Mammary epithelial cell (primary cell): ENCODE measurements at regions of chr4 and their contacts with region 1.

Region 1: GRCh38 chr4:174318829-174319764 is 35.4 kb downstream of the CEP44 start:
- DNase-seq: peak; percentile 27
- H3K4me3 ChIP-seq: no peak overlapping the region
- H3K27ac ChIP-seq: no peak overlapping the region
- H3K4me1 ChIP-seq: peaks cover 10% of the 10 kb centered on the region
- H3K27me3 ChIP-seq: no peaks in the 10 kb centered on the region
- CTCF ChIP-seq: peak; percentile 64 to 69

Region 2: DNA sequence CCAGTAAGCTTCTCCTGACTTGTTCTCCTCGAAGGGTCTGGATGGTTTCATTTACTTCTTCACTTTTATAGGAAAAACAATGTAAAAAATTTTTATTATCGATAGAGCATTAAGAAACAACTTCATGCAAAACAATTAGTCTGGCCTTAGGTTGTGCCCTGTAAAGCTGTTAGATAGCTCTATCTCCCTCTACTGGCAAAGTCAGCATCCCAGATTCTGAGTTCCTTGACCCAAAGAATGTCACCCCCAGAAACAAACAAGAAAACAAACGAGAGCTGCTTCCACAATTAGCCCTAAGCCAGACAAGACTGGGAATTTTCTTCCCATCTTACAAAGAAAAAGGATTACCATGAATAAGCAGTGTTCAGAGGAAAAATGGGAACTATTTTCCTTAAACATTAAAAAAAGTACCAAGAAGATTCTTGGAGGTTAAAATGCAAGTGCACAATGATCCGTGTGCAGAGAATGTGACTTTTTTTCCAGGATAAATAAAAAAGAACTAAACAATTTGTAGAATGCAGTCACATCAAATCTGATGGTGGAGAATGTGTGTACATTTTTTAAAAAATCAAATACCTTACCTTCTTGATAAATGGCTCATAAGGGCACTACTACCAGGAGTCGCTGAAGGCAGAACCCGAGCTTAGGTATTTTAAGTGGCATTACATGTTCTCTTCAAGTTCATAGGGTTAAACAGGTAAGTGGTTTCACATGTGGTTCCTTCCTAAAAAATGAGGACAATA is 328.8 kb before region 1 on chr4:
- CTCF ChIA-PET with region 1: no interaction called
- dilution Hi-C with region 1: no loop called
- in situ Hi-C with region 1: no loop called
- intact Hi-C with region 1: loop called (anchors 2 kb)
- DNase-seq: peak; percentile 8
- H3K4me3 ChIP-seq: no peak overlapping the region
- H3K27ac ChIP-seq: no peak overlapping the region
- H3K4me1 ChIP-seq: no peaks in the 10 kb centered on the region
- H3K27me3 ChIP-seq: no peaks in the 10 kb centered on the region
- CTCF ChIP-seq: peak; percentile 51 to 62

Region 3: GRCh38 chr4:174120446-174121295 is 198.4 kb before region 1 on chr4:
- CTCF ChIA-PET with region 1: no interaction called
- dilution Hi-C with region 1: no loop called
- in situ Hi-C with region 1: no loop called
- intact Hi-C with region 1: loop called (anchors 2 kb)
- DNase-seq: peak; percentile 50
- H3K4me3 ChIP-seq: peak overlapping the region; percentile 37 to 48 (median 45)
- H3K27ac ChIP-seq: no peak overlapping the region
- H3K4me1 ChIP-seq: no peaks in the 10 kb centered on the region
- H3K27me3 ChIP-seq: peaks cover 4% of the 10 kb centered on the region
- CTCF ChIP-seq: peak; percentile 54 to 61

Region 4: DNA sequence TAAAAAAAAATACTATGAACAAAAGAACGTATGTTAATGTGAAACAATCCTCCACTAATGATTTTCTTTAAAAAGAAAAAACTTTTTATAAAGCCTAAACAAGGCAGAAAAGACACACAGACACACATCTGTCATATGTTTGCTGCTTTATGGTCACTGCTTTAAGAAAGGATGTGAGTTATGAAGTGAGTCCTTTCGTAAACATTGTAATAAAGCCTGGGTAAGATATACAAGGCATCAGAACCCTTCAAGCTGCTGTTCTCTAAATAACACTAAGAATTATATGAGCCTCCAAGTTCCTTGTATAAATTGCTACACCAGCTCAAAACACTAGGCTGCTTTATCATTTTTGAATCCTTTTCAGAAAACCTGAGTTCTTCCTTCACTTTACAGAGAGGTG is 117.2 kb before region 1 on chr4:
- CTCF ChIA-PET with region 1: no interaction called
- dilution Hi-C with region 1: no loop called
- in situ Hi-C with region 1: no loop called
- intact Hi-C with region 1: no loop called
- DNase-seq: no peak
- H3K4me3 ChIP-seq: no peak overlapping the region
- H3K27ac ChIP-seq: no peak overlapping the region
- H3K4me1 ChIP-seq: no peaks in the 10 kb centered on the region
- H3K27me3 ChIP-seq: peaks cover 7% of the 10 kb centered on the region
- CTCF ChIP-seq: no peak

Region 5: DNA sequence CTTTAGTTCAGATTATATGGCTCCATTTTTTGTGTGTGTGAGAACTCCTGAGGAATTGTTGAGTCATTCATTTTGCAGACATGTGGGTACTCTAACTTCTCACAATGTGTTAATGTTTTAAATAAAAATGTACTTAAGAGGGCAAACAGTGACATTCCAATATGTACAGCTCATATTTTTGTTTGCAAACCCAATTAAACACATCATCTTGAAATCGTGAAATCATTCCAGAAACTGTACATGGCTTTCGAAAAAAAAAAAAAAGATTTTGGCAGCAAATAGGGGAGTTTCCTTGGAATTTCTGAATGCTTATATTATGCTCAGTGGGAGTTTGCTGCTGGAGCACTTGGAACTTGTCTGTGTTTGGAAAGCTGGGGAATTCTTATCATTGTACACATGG is 118.2 kb after region 1 on chr4:
- CTCF ChIA-PET with region 1: no interaction called
- dilution Hi-C with region 1: no loop called
- in situ Hi-C with region 1: no loop called
- intact Hi-C with region 1: no loop called
- DNase-seq: peak; percentile 89
- H3K4me3 ChIP-seq: no peak overlapping the region
- H3K27ac ChIP-seq: no peak overlapping the region
- H3K4me1 ChIP-seq: peaks cover 4% of the 10 kb centered on the region
- H3K27me3 ChIP-seq: no peaks in the 10 kb centered on the region
- CTCF ChIP-seq: no peak